AG04450 (cell line): ENCODE measurements at regions of chr22 and their contacts with region 1.

Region 1: GRCh38 chr22:23893943-23894709 is at the start of gene MIF:
- DNase-seq: peak; percentile 72
- H3K4me3 ChIP-seq: peak within 1 kb of the TSS; percentile 85
- H3K27ac ChIP-seq: peak within 1 kb of the TSS; percentile 97
- H3K27me3 ChIP-seq: no peaks in the 10 kb centered on the region
- CTCF ChIP-seq: peak; percentile 78
- polyA plus RNA-seq, gene MIF: 154 and 186 TPM in 2 replicates

Region 2: GRCh38 chr22:23849009-23850006 is 44.8 kb before region 1 on chr22:
- CTCF ChIA-PET with region 1: interaction called, 10 read pairs
- POLR2A ChIA-PET with region 1: interaction called, 4 read pairs
- DNase-seq: no peak
- H3K4me3 ChIP-seq: no peak overlapping the region
- H3K27ac ChIP-seq: no peak overlapping the region
- H3K27me3 ChIP-seq: no peaks in the 10 kb centered on the region
- CTCF ChIP-seq: peak; percentile 95

Region 3: GRCh38 chr22:23857606-23858483 is 36.3 kb before region 1 on chr22 and contains the start of gene SLC2A11:
- CTCF ChIA-PET with region 1: interaction called, 19 read pairs
- POLR2A ChIA-PET with region 1: interaction called, 10 read pairs
- DNase-seq: peak; percentile 92
- H3K4me3 ChIP-seq: peak within 1 kb of the TSS; percentile 87
- H3K27ac ChIP-seq: peak within 1 kb of the TSS; percentile 57
- H3K27me3 ChIP-seq: no peaks in the 10 kb centered on the region
- CTCF ChIP-seq: no peak; the same call in none of the 2 replicates
- polyA plus RNA-seq, gene SLC2A11: 7.2 and 7.5 TPM in 2 replicates

Region 4: GRCh38 chr22:23913661-23914353 is 19.7 kb after region 1 on chr22:
- CTCF ChIA-PET with region 1: interaction called, 20 read pairs
- POLR2A ChIA-PET with region 1: interaction called, 23 read pairs
- DNase-seq: peak; percentile 96
- H3K4me3 ChIP-seq: peak overlapping the region; percentile 78
- H3K27ac ChIP-seq: peak overlapping the region; percentile 85
- H3K27me3 ChIP-seq: no peaks in the 10 kb centered on the region
- CTCF ChIP-seq: no peak

Region 5: GRCh38 chr22:23922651-23923320 is 28.7 kb after region 1 on chr22:
- CTCF ChIA-PET with region 1: interaction called, 17 read pairs
- POLR2A ChIA-PET with region 1: interaction called, 11 read pairs
- DNase-seq: no peak
- H3K4me3 ChIP-seq: no peak overlapping the region
- H3K27ac ChIP-seq: no peak overlapping the region
- H3K27me3 ChIP-seq: no peaks in the 10 kb centered on the region
- CTCF ChIP-seq: no peak